ENCODE measurements at regions of chr6 and their contacts with region 1.

Region 1: GRCh38 chr6:136792410-136793262 is at the start of gene MAP3K5:
- DNase-seq: peak; percentile 98
- ATAC-seq: peak; percentile 93
- total RNA-seq, gene MAP3K5: 34.7 TPM

Region 2: DNA sequence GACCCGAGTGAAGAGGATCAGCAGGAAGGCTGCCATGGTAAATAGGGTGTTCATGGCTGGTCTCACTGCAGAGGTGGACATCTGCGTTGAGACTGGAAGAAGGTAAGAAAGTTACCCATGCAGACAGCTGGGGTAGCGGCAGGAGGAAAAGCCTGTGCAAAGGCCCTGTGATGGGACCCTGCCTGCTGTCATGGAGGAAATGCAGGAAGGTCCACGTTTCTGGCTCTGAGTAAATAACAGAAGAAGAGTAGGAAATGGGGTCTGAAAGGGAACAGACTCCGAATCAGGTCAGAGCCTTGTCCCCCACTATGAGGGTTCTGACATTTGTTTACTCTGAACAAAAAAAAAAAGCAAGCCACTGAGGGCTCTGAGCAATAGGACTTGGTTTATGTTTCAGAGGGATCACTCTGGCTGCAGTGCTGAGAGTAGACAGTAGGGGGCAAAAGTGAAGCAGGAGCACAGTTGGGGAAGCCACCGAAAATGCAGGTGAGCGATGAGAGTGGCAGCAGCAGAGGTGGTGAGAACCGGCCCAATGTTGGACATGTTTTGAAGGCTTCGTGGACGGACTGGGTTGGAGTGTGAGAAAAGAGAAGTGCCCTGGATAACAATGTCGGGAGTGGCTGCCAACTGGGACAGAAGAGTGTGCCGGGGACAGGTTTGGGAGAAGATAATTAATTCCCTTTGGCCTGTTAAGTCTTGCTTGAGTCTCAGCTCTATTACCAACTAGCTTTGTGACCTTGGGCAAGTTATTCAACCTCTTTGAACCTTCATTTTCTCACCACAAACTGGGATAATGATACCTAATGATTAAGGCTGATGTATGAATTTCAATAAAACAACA is 184.5 kb before region 1 on chr6:
- intact Hi-C with region 1: loop called (anchors 1 kb)
- DNase-seq: no peak
- ATAC-seq: peak; percentile 59

Region 3: DNA sequence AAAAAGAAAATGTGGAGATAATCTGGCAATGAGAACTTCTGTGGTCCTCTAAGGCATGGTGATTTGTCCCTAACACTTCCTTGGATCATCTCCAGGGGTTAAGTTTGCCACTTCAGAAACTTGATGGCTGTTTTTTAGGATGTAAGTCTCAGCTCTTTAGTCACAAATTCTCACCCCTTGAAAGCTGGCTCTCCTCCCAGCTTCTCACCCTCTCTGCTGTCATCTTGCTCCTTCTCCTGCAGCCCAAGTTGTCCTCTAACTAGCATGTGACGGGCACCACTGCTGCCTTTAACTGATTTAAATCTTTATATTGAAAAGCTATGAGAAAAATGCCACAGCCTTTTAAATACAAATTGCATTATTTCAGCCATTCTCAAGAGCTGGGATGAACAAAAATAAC is 108.2 kb before region 1 on chr6:
- intact Hi-C with region 1: loop called (anchors 2 kb)
- DNase-seq: no peak
- ATAC-seq: peak; percentile 60

Region 4: DNA sequence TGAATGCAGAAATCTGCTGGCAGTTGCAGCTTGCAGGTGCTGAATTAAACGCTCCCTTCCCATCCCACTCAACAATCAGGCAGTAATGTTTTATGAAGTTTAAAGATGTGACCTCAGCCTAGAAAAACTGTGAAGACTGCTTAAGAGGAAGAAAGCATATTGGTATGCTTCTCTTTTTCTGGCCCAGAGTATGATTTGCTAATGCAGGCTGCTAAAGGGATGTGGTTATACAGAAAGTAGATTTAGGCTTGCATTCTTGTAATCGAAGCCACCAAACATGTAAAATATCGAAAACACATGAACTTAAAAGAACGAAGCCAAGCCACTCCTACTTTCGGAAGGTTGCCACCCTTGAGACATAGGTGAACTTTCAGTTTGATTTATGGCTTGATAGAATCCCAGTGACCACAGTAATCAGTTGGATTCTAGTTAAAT is 41.1 kb before region 1 on chr6:
- intact Hi-C with region 1: loop called (anchors 5 kb)
- DNase-seq: no peak
- ATAC-seq: no peak

Measured in Right ventricle myocardium inferior (tissue), 1 donor.